K562 (cell line): ENCODE measurements at regions of chr14 and their contacts with region 1.

Region 1: DNA sequence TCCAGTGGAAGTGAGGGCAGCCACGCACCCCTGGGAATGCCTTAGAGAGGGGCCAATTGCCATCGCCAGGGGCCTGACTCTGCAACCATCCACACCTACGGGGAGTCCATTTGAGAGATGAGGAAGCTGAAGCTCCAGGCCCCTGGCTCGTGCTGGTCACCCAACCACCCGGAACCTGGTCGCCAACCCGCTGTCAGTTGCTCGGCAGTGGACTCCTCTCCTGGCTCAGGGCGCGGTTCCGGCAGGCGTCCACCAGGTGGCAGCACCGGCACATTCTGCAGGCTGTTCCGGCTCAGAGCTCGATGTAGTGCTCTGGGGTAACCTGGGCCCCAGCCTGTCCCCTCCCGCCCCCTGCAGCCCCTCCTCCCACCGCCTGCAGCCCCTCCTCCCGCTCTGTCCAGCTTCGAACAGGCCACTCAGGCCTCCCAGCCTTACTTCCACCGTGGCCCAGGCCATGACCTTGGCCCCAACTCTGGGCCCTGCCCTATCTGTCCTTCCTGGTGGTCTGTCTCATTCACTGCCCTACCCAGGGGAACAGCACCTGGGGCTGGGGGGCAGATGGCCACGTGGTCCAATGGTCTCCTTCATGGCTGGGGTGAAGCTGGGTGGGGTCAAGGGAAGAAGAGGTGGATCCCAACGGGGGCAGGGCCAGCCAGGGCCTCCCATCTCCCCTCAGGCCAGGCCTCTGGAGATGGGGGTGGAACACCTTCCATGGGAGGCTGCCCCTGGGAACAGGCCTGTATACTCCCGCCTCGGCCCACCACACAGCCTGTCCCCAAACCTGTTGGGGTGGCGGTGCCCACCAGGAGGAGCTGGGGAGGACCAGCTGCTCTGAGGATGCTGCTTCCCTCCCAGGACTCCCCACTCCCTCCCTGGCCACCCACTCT is 15.7 kb downstream of the SIVA1 start:
- DNase-seq: peak; percentile 83 to 89 (median 85)
- ATAC-seq: peak; percentile 94
- H3K4me3 ChIP-seq: no peak overlapping the region
- H3K27ac ChIP-seq: peak overlapping the region; percentile 78
- H3K4me1 ChIP-seq: peaks cover 6 to 33% of the 10 kb centered on the region in 2 experiments; a peak in 4 of 5 replicates
- H3K27me3 ChIP-seq: no peaks in the 10 kb centered on the region
- CTCF ChIP-seq: peak; percentile 61 to 89 (median 85)
- EP300 ChIP-seq: no peak
- POLR2A ChIP-seq: peak; percentile 54; the same call in 1 of the 2 replicates
- RAD21 ChIP-seq: peak; percentile 60 to 70

Region 2: DNA sequence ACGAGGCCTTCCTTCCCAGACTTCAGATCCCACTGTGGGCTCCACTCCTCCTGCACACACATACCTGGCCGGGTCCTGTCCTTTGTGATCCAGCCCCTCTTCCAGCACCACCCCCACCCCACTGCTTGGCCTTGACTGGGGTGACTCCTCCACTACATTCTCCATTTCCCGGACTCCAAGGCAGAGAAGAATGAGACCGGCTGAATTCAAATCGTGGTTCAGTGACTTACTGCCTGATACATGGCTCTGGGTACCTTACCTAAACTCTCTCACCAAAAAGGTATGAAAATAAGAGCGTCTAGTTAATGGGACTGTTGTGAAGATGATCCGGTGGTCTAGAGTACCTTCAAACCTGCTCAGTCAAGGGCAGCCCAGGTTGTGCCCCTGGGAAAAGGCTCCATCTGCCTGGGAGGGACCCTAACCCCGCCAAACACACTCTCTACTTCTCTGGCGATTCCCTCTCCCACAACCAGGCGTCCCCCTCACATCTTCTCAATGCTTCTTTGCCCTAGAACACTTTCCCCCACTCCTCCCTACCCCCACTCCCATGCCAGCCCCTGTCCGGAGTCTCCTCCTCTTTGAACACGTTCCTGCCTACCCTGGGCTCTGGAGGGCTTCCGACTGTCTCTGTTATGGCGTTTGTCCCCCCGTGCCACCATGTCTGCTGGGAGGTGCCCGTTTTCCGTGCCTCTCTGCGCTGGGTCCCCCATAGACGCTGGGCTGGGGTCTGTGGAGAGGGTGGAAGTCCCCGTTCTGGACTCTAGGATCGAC is 30.7 kb after region 1 on chr14:
- CTCF ChIA-PET with region 1: interaction called, 3 read pairs
- POLR2A ChIA-PET with region 1: interaction called, 3 read pairs
- in situ Hi-C with region 1: no loop called
- intact Hi-C with region 1: loop called (anchors 2 kb)
- DNase-seq: peak in 2 of 4 experiments; percentile 38 to 55
- ATAC-seq: peak; percentile 5
- H3K4me3 ChIP-seq: peak overlapping the region; percentile 49
- H3K27ac ChIP-seq: peak overlapping the region; percentile 84
- H3K4me1 ChIP-seq: peaks cover 53 to 92% of the 10 kb centered on the region in 2 experiments
- H3K27me3 ChIP-seq: no peaks in the 10 kb centered on the region
- CTCF ChIP-seq: peak; percentile 17 to 38 (median 37); a peak in 2 of 6 replicates
- EP300 ChIP-seq: no peak
- POLR2A ChIP-seq: no peak
- RAD21 ChIP-seq: no peak; a peak in 1 of 4 replicates

Region 3: GRCh38 chr14:104820669-104821228 is 52.1 kb after region 1 on chr14:
- CTCF ChIA-PET with region 1: interaction called, 13 read pairs
- POLR2A ChIA-PET with region 1: no interaction called
- in situ Hi-C with region 1: loop called (anchors 5 kb)
- intact Hi-C with region 1: no loop called
- DNase-seq: peak in 2 of 4 experiments; percentile 18
- ATAC-seq: 0 out of 3 replicates have a peak, but pooled peaks have one; percentile 6
- H3K4me3 ChIP-seq: no peak overlapping the region
- H3K27ac ChIP-seq: no peak overlapping the region
- H3K4me1 ChIP-seq: peaks cover 2 to 35% of the 10 kb centered on the region in 2 experiments; a peak in 3 of 5 replicates
- H3K27me3 ChIP-seq: no peaks in the 10 kb centered on the region
- CTCF ChIP-seq: peak in 2 of 3 experiments; percentile 42 to 48; a peak in 3 of 6 replicates
- EP300 ChIP-seq: no peak
- POLR2A ChIP-seq: no peak
- RAD21 ChIP-seq: peak in 1 of 2 experiments; percentile 28; a peak in 1 of 4 replicates

Region 4: DNA sequence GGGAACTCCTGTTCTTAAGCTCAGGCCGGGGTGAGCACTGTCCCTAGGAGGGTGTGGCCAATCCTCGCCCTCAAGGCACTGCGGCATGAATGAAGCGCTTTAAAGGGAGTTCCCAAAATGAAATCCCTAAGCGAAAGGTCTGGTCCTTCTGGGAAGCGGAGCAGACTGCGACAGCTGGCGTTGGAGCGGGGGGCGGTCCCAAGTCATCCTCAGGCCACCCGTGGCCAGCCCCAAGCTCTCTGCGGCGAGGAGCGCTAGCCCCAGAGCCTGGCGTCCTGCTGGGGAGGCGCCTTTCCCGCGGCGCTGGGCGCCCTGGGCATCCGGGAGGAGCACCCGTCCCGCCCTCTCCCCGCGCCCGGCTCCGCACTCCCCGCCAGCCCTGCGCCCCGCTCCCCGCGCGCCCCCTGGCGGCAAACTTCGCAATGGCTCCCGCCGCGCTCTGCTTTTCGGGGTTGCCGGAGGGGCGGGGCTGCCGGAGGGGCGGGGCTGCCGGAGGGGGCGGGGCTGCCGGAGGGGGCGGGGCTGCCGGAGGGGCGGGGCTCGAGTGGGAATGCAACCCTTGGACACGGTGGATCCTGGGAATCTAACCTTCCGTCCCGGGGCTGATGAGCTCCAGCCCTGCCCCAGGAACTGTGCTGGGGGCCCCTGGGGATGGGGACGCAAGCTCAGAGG is 57.6 kb after region 1 on chr14:
- CTCF ChIA-PET with region 1: interaction called, 13 read pairs
- POLR2A ChIA-PET with region 1: no interaction called
- in situ Hi-C with region 1: loop called (anchors 5 kb)
- intact Hi-C with region 1: loop called (anchors 1 kb)
- DNase-seq: peak; percentile 83 to 87 (median 84)
- ATAC-seq: peak; percentile 90
- H3K4me3 ChIP-seq: peak overlapping the region; percentile 48
- H3K27ac ChIP-seq: no peak overlapping the region
- H3K4me1 ChIP-seq: peaks cover 6 to 36% of the 10 kb centered on the region in 2 experiments; a peak in 3 of 5 replicates
- H3K27me3 ChIP-seq: no peaks in the 10 kb centered on the region
- CTCF ChIP-seq: peak in 2 of 3 experiments; percentile 66 to 85; a peak in 4 of 6 replicates
- EP300 ChIP-seq: no peak
- POLR2A ChIP-seq: no peak
- RAD21 ChIP-seq: peak; percentile 54 to 62

Region 5: DNA sequence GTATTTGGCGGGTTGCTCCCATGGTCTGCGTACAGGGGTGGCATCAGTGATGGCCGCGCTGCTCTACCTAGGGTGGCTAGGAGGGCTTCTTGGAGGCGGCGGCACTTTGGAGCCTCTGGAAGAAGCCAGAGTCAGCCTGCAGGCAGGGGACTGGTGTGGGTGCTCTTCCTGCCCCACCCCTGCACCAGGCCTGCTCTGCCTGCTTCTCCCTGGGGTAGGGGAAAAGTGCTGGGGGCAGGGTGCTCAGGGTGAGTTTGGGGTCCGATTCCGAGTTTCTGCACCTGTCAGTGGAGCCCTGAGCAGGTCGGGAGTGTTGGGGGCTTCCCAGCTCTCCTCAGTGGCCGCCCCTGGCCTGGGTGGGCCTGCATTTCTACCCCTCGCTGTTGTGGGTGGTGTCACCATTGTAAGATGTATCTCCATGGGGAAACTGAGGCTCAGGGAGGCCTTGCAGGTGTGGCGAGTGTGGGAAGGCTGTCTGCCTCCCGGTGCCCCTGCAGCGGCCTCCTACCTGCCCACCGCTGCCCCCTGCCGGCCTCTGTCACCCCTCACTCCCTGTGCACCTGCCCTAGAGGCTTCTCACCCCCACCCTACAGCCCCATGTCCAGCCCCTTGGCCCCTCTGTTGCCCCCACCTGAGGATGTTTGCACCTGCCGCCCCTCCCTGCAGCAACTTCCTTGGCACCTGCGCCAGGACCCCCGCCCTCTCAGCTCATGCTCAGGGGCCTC is 101.9 kb after region 1 on chr14:
- CTCF ChIA-PET with region 1: no interaction called
- POLR2A ChIA-PET with region 1: no interaction called
- in situ Hi-C with region 1: no loop called
- intact Hi-C with region 1: loop called (anchors 10 kb)
- DNase-seq: peak in 3 of 4 experiments; percentile 33 to 37 (median 36)
- ATAC-seq: peak; percentile 77
- H3K4me3 ChIP-seq: no peak overlapping the region
- H3K27ac ChIP-seq: no peak overlapping the region
- H3K4me1 ChIP-seq: peaks cover 0 to 83% of the 10 kb centered on the region in 2 experiments; a peak in 2 of 5 replicates
- H3K27me3 ChIP-seq: no peaks in the 10 kb centered on the region
- CTCF ChIP-seq: peak; percentile 27 to 55 (median 38); a peak in 5 of 6 replicates
- EP300 ChIP-seq: no peak
- POLR2A ChIP-seq: no peak
- RAD21 ChIP-seq: peak in 1 of 2 experiments; percentile 33; a peak in 2 of 4 replicates

Region 6: DNA sequence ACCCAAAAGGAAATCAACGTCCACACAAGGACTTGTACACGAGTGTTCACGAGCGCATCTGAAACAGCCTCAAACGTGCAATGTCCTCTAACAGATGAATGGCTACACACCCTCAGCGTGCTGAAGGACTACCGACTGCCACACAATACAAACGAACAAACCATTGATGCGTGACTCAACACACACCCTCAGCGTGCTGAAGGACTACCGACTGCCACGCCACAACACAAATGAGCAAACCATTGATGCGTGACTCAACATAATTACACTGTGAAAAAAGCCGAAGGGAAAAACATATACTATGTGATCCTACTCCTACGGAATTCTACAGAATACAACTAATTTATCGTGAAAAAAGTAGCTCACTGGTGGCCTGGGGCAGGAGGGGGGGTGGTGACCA is 454.6 kb after region 1 on chr14:
- CTCF ChIA-PET with region 1: no interaction called
- POLR2A ChIA-PET with region 1: no interaction called
- in situ Hi-C with region 1: no loop called
- intact Hi-C with region 1: no loop called
- DNase-seq: no peak
- ATAC-seq: no peak
- H3K4me3 ChIP-seq: no peak overlapping the region
- H3K27ac ChIP-seq: no peak overlapping the region
- H3K4me1 ChIP-seq: peaks cover 0 to 7% of the 10 kb centered on the region in 2 experiments; a peak in 1 of 5 replicates
- H3K27me3 ChIP-seq: no peaks in the 10 kb centered on the region
- CTCF ChIP-seq: no peak
- EP300 ChIP-seq: no peak
- POLR2A ChIP-seq: no peak
- RAD21 ChIP-seq: no peak